K562 (cell line): ENCODE measurements at regions of chr5 and their contacts with region 1.

Region 1: GRCh38 chr5:115579747-115580173 is 22.5 kb downstream of the TICAM2 start:
- DNase-seq: no peak
- ATAC-seq: no peak
- H3K4me3 ChIP-seq: no peak overlapping the region
- H3K27ac ChIP-seq: no peak overlapping the region
- H3K4me1 ChIP-seq: no peaks in the 10 kb centered on the region
- H3K27me3 ChIP-seq: no peaks in the 10 kb centered on the region
- CTCF ChIP-seq: no peak
- EP300 ChIP-seq: no peak
- POLR2A ChIP-seq: no peak
- RAD21 ChIP-seq: no peak

Region 2: DNA sequence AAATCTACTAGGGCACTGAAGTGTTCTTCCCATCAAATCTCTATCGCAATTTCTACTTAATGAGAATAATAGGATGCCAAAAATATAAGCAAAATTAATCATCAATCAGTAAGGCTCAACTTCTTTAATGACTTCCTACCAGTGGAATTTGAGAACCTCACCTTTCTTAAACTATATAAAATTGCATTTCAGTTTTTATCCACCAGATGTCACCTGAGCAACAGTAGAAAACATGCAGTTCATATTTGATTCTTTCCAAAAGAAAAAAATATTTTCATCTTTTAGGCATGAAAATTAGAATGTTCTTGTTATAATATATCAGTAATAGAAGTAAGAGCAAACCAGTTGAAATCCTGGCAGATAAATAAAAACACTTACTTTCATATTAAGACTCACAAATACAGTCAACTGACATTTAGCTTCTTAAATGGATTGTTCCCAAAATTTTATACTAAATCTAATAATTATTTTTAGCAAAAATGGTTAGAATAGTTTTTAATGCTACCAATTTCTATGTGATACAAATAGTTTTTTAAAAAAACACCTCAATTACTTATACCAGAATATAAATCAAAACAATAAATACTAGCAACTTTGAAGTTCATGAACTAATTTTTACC is 269.9 kb before region 1 on chr5:
- CTCF ChIA-PET with region 1: interaction called, 15 read pairs
- POLR2A ChIA-PET with region 1: no interaction called
- in situ Hi-C with region 1: loop called (anchors 5 kb)
- intact Hi-C with region 1: loop called (anchors 1 kb)
- DNase-seq: peak in 3 of 4 experiments; percentile 12 to 49 (median 15)
- ATAC-seq: peak; percentile 70
- H3K4me3 ChIP-seq: no peak overlapping the region
- H3K27ac ChIP-seq: no peak overlapping the region
- H3K4me1 ChIP-seq: no peaks in the 10 kb centered on the region
- H3K27me3 ChIP-seq: no peaks in the 10 kb centered on the region
- CTCF ChIP-seq: peak in 1 of 3 experiments; percentile 70; a peak in 3 of 6 replicates
- EP300 ChIP-seq: no peak
- POLR2A ChIP-seq: no peak
- RAD21 ChIP-seq: peak; percentile 87 to 91

Region 3: DNA sequence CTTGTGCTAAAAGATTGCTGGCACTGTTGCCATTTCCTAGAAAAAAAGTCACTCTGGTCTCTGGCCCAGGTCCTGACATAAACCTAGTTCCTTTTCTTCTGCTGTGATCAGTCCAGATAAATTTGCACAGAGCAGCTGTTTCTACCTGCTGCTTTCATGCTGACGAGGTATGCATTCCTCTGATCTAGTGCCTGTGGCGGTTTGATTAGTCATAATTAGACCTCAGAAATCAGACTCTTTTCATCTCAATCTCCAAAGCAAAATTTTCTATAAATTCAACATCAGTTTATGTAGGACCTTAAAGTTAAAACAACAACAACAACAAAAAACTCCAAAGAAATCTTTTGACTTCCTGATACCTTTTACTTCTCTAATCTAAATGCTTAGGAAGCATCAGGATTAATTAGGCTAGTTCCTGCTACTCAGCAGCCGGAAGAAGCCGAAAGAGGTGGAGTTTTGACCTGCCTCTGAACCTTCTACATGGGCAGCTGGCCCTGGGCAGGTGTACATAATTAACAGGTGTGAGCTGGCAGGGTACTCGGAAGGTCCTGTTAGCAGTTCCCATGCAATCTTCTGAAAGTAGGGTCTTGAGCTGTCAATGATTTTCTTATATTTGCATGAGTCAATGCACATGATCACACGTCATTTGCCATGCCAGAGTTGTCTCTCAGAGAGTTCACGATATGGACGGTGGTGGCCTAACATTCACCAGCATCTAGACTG is 200.0 kb before region 1 on chr5:
- CTCF ChIA-PET with region 1: no interaction called
- POLR2A ChIA-PET with region 1: no interaction called
- in situ Hi-C with region 1: no loop called
- intact Hi-C with region 1: loop called (anchors 10 kb)
- DNase-seq: no peak
- ATAC-seq: no peak
- H3K4me3 ChIP-seq: no peak overlapping the region
- H3K27ac ChIP-seq: no peak overlapping the region
- H3K4me1 ChIP-seq: no peaks in the 10 kb centered on the region; a peak in 1 of 5 replicates
- H3K27me3 ChIP-seq: no peaks in the 10 kb centered on the region; a peak in 1 of 5 replicates
- CTCF ChIP-seq: no peak
- EP300 ChIP-seq: no peak
- POLR2A ChIP-seq: no peak
- RAD21 ChIP-seq: no peak